Heart left ventricle (tissue), 16 donors: ENCODE measurements at regions of chr22 and their contacts with region 1.

Region 1: GRCh38 chr22:17057959-17058814 is 26.6 kb upstream of the IL17RA start:
- DNase-seq: peak in 4 of 5 donors; percentile 53 to 68 (median 61)
- ATAC-seq: peak; percentile 66 to 88 (median 82)
- H3K4me3 ChIP-seq: no peak overlapping the region
- H3K27ac ChIP-seq: no peak overlapping the region
- H3K4me1 ChIP-seq: peaks cover 0 to 6% (median under 1%) of the 10 kb centered on the region in 12 donors
- H3K27me3 ChIP-seq: peaks cover 0 to 3% (median 0%) of the 10 kb centered on the region in 9 donors
- CTCF ChIP-seq: peak; percentile 83 to 96 (median 90)
- POLR2A ChIP-seq: no peak

Region 2: DNA sequence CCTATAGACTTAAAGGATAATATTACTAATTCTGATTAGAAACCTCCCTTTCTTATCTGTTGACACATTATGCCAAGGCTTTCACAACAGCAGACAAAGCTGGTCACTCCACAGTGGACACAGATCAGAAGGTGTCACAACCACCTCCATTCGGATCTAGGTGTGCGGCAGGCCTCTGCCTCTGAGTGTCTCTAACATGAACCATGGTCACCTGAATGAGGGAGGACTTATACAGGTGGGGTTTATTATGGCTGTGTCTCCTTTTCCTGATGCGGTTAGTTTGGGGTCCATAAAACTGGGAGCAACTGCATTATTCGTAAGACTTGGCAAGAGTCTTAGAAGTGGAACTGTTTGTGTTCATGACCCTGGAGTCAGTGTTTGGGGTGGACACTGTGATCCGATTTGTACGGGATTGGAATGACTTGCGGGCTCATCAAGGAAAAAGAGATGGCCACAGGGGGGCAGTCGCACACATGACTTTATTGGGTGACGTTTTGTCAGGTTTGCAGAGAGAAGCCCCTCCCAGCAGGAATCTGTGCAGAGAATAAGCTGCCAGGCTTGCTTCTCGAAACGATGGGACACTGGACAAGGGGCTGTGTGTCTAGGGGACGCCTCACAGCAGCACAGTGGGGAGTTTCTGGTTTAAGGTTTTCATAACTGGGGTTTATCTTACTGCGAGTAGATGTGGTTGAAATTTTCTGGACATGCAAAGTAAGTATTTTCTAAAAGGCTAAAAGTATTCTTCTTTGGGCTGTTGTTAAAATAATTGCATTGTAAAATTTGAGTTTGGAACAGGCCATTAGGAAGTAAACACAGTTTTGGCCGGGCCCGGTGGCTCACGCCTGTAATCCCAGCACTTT is 140.8 kb before region 1 on chr22:
- intact Hi-C with region 1: loop called (anchors 1 to 10 kb)
- DNase-seq: peak; percentile 18 to 68 (median 49)
- ATAC-seq: peak in 3 of 4 donors; percentile 39 to 47 (median 39)
- H3K4me3 ChIP-seq: no peak overlapping the region
- H3K27ac ChIP-seq: no peak overlapping the region
- H3K4me1 ChIP-seq: no peaks in the 10 kb centered on the region
- H3K27me3 ChIP-seq: peaks cover 0 to 76% (median 11%) of the 10 kb centered on the region in 9 donors
- CTCF ChIP-seq: peak; percentile 46 to 66 (median 52)
- POLR2A ChIP-seq: no peak

Region 3: DNA sequence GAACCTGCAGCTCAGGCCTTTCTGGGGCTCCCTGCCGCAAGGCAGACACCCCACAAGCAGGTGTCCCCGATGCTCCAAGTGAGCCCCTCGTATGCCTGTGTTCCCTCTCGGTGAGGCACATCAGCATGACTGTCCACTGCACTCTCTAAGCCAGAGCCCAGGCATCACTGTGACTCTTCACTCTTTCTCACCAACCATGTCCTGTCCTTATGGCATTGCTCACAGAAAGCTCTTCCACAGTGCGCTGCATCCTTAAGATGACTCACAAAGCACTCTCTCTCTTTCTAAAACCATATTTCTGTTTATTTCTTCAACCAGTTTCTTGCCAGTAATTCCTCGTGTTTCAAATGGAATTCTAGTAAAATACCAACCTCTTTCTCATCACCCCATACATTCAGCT is 68.3 kb before region 1 on chr22:
- intact Hi-C with region 1: loop called in 1 of 10 experiments (anchors 10 kb)
- DNase-seq: no peak
- ATAC-seq: no peak
- H3K4me3 ChIP-seq: no peak overlapping the region
- H3K27ac ChIP-seq: no peak overlapping the region
- H3K4me1 ChIP-seq: no peaks in the 10 kb centered on the region
- H3K27me3 ChIP-seq: peaks cover 0 to 6% (median 0%) of the 10 kb centered on the region in 9 donors
- CTCF ChIP-seq: no peak
- POLR2A ChIP-seq: no peak